GM23248 (cell line): ENCODE measurements at regions of chr11 and their contacts with region 1.

Region 1: DNA sequence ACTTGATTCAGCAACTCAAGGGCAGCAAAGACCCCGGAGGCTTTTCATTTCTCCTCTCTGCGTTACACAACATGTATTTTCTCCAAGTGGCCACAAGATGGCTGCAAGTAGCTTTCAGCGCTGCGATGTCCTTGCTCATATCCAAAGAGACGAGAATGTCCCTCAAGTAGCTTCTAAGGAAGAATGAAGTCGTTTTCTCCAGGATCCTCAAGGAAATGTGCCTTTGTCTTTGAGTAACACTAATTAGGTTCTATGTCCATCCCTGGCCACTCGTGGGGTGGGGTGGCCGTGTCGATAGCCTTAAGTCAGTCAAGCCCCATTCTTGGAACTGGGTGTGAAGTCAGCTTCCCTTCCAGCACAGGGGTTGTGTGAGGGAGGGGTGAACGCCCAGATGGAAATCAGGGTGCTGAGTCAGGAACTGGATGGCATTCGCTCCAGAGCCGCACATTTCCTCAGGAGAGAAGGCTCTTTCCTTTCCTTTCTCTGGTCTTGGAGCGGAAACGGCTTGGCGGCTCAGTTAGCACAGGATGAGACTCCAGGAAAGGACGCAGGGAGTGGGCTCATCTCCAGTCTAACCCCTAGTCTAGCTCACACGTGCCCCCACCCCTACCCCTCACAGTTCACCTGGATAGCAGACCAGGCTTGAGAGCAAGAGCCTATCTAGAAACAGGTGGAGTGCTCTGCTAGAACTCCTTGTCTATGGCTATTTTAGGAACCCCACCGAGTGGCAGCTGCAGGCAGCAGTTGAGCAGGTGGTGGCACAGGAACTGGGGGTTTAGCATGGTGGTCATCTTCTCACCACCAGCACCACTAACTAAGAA is 44.3 kb downstream of the NNMT start:
- DNase-seq: peak; percentile 92
- H3K4me3 ChIP-seq: peak overlapping the region; percentile 76
- H3K27ac ChIP-seq: peak overlapping the region; percentile 55
- H3K4me1 ChIP-seq: peaks cover 4% of the 10 kb centered on the region; the same call in 1 of the 2 replicates
- H3K27me3 ChIP-seq: no peaks in the 10 kb centered on the region

Region 2: GRCh38 chr11:113806406-113806805 is 534.1 kb before region 1 on chr11:
- in situ Hi-C with region 1: no loop called
- DNase-seq: peak; percentile 24
- H3K4me3 ChIP-seq: no peak overlapping the region
- H3K27ac ChIP-seq: no peak overlapping the region
- H3K4me1 ChIP-seq: no peaks in the 10 kb centered on the region
- H3K27me3 ChIP-seq: no peaks in the 10 kb centered on the region

Region 3: DNA sequence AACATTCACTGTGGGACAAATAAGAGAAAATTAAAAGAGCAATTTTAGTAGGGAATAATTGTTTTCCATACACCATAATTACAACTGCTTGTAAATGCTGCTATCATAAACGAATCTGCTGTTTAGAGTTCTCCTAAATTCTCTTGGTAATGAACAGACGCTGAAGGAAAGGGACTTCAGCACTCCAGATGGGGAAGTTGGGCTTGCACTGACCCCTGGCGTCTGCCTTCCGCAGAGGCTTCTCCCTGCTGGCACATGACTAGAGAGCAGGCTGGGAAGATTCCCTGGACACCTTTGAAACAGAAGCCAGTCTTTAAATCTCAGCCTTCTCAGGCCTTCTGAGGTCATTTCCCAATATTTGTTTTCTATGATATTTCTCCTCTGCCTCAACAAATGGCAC is 421.9 kb after region 1 on chr11:
- in situ Hi-C with region 1: loop called (anchors 10 kb)
- DNase-seq: peak; percentile 75
- H3K4me3 ChIP-seq: no peak overlapping the region
- H3K27ac ChIP-seq: no peak overlapping the region
- H3K4me1 ChIP-seq: no peaks in the 10 kb centered on the region
- H3K27me3 ChIP-seq: no peaks in the 10 kb centered on the region